Dendritic cell treated with granulocyte-macrophage colony-stimulating factor and Interleukin-4, amounts not matched to agents 40 ng/mL and 50 ng/mL, for 4 days (primary cell): ENCODE measurements at regions of chr20 and their contacts with region 1.

Region 1: DNA sequence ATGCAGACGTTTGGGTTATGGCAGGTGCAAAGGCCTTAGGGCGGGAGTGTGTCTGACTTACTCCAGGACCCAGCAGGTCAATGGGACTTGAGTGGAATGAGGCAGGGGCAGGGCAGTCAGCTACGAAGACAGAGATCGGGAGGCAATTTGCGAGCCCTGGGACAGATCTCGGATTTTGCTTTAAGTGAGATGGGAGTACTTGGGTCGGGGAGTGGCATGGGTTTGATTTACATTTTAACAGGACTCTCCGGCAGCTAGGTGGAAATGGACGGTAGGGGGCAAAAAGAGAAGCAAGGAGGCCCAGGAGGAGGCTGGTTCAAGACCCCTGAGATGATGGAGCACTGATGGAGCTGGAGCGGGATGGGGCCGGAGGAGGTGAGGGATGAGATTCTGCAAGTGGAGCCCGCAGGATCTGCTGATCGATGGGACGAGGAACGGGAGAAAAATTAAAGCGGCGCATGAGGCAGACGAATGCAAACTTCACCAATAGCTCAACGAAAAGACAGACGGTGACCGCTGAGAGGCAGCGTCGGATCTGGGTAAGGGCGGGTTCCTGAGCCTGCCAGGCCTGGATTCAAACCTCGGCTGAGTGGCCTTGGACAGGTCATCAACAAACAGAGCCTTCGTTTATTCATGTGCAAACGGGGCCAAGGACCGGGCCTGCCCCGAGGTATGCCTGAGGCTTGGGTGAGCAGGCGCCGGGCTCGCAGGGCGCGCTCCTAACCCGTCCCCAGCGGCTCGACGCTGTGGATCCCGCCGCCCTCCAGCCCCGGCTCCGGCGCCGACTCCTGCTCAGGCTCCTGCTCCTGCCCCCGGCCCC is 756 bp upstream of the RBCK1 start:
- H3K4me3 Mint-ChIP-seq: peak overlapping the region; percentile 69
- H3K27ac Mint-ChIP-seq: peak overlapping the region; percentile 76
- H3K4me1 Mint-ChIP-seq: peaks cover 37% of the 10 kb centered on the region
- H3K27me3 Mint-ChIP-seq: peaks cover 8% of the 10 kb centered on the region

Region 2: DNA sequence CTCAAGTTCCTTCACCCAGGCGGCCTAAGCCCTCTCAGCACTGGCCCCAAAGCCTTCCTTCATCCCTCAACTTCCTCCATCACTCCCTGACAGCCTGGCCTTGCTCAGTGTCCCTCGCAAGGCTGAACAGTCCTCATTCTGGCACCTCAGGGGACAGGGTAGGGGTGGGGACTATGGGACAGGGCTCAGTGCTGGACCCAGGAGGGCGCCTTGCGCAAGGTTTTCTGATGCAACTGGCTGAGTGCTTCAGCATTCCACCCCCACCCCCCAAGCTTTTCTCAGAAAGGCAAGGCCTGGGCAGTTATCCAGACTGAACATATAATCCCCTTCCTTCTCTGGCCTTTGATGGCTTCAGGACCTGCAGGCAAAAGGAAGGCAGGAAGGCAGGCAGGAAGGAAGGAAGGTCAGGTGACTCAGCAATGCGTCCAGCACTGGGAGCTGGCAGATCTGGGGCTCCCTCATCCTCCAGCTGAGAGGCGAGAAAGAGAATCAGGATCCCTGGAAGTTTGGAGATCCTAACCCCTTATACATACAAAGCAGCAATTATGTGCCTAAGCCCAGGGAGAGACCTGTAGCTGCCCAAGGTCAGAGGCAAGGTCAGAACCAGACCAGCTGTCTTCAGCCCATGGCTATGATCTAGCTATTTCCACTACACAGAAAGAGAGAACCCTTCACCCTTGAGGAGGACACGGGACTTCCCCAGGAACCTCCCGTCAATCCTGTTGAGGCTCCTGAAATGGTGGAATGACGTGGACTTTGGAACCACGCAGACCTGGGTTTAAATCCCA is 35.4 kb before region 1 on chr20:
- intact Hi-C with region 1: loop called (anchors 5 kb)
- H3K4me3 Mint-ChIP-seq: no peak overlapping the region
- H3K27ac Mint-ChIP-seq: peak overlapping the region; percentile 81
- H3K4me1 Mint-ChIP-seq: peaks cover 37% of the 10 kb centered on the region
- H3K27me3 Mint-ChIP-seq: no peaks in the 10 kb centered on the region

Region 3: GRCh38 chr20:381581-382290 is 25.6 kb before region 1 on chr20:
- intact Hi-C with region 1: loop called (anchors 1 kb)
- H3K4me3 Mint-ChIP-seq: peak overlapping the region; percentile 89
- H3K27ac Mint-ChIP-seq: peak overlapping the region; percentile 78
- H3K4me1 Mint-ChIP-seq: no peaks in the 10 kb centered on the region
- H3K27me3 Mint-ChIP-seq: peaks cover 7% of the 10 kb centered on the region

Region 4: GRCh38 chr20:462199-462991 is 55.1 kb after region 1 on chr20 and contains the start of gene TBC1D20:
- intact Hi-C with region 1: loop called (anchors 5 kb)
- H3K4me3 Mint-ChIP-seq: peak within 1 kb of the TSS; percentile 89
- H3K27ac Mint-ChIP-seq: peak within 1 kb of the TSS; percentile 83
- H3K4me1 Mint-ChIP-seq: peaks cover 36% of the 10 kb centered on the region
- H3K27me3 Mint-ChIP-seq: peaks cover 8% of the 10 kb centered on the region